ENCODE measurements at regions of chr10 and their contacts with region 1.

Region 1: DNA sequence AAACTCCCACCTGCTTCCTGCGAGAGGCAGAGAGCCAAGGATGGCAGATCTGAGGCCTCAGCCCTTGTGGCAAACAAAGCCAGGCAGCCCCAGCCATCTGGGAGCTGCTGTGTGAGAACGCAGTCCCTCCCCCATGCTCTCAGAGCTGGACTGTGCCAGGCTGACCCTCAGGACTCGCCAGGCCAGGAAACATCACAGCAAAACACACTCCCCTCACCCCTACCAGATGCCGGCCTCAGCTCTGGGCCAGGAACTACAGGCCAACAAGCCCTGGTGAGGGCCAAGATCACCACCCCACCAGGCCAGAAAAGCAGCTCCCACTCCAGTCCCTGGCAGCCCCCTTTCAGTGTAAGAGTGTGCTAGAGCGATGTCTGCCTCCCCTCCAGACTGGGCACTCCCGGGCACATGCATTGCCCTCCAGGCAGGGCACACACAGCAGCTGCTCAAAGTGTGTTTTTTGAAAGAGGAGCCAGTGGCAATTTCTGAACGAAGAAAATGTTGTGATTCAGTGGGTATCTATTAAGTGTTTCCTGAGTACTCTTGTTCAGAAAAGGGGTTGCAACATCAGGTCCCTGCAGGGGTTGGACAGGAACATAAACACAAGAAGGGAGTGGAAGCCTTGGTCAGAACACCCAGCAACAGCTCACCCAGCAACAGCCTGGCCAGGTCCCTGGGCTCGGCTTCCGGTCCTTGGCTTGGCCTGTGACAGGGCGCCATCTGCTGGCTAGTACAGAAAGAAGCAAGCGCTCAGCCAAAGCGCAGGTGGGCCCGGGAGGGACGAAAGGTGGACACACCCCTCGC is 18.3 kb downstream of the LRRC20 start:
- DNase-seq: peak; percentile 95
- ATAC-seq: peak; percentile 99

Region 2: DNA sequence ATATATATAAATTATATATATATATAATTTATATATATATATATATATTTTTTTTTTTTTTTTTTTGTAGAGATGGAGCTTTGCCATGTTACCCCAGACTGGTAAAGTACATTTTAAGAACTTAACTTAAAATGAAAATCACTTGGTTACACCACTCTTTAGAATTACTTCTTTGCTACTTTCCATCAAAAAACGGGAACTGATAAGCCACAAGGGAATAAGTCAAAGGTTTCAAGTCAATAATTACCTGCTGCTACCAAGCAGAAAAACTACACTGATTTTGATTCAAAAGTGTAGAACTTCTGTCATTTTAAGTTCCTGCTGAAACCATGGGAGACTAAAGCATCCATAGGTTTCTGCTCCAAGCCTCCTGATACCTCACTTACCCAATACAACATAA is 143.1 kb before region 1 on chr10:
- intact Hi-C with region 1: loop called (anchors 5 kb)
- DNase-seq: no peak
- ATAC-seq: no peak

Region 3: DNA sequence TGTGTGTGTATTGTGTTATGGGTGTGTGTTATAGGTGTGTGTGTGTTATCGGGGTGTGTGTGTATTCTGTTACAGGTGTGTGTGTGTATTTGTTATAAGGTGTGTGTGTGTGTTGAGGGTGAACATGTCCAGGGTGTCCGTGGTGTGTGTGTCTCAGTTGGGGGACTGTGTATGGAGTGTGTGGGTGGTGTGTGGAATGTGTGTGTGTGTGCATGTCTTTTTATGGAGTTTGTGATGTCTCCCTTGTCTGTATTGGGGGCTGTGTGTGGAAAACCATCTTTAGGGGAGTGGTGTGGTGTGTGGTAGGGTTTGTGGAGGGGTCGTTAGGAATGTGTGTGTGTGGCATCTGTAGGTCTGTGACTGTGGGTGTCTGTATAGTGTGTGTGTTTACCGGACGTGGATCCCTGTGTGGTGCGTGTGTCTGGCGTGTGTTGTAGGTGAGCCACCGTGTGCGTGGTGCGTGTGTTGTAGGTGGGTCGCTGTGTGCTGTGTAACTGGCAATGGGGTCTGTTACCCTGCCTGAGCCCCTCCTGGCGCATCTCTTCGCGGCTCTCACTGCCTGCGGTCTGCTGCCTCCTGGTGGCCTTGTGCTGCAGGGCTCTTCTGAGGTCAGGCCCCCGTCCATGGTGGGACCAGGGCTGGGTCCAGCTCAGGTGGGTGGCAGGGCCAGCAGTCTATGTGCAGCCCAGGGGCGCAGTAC is 176.1 kb after region 1 on chr10:
- intact Hi-C with region 1: no loop called
- DNase-seq: no peak
- ATAC-seq: peak; percentile 26

Measured in sciatic nerve (tissue), 2 donors.